ENCODE measurements at regions of chr12 and their contacts with region 1.

Region 1: GRCh38 chr12:6764011-6764828 is 1.9 kb upstream of the PTMS start:
- DNase-seq: peak; percentile 97
- H3K4me3 ChIP-seq: peak overlapping the region; percentile 16
- CTCF ChIP-seq: no peak

Region 2: GRCh38 chr12:6688999-6689882 is 75.0 kb before region 1 on chr12 and contains the start of gene ZNF384:
- CTCF ChIA-PET with region 1: interaction called, 3 read pairs
- POLR2A ChIA-PET with region 1: interaction called, 13 read pairs
- DNase-seq: peak; percentile 93
- H3K4me3 ChIP-seq: peak within 1 kb of the TSS; percentile 93
- CTCF ChIP-seq: no peak

Region 3: DNA sequence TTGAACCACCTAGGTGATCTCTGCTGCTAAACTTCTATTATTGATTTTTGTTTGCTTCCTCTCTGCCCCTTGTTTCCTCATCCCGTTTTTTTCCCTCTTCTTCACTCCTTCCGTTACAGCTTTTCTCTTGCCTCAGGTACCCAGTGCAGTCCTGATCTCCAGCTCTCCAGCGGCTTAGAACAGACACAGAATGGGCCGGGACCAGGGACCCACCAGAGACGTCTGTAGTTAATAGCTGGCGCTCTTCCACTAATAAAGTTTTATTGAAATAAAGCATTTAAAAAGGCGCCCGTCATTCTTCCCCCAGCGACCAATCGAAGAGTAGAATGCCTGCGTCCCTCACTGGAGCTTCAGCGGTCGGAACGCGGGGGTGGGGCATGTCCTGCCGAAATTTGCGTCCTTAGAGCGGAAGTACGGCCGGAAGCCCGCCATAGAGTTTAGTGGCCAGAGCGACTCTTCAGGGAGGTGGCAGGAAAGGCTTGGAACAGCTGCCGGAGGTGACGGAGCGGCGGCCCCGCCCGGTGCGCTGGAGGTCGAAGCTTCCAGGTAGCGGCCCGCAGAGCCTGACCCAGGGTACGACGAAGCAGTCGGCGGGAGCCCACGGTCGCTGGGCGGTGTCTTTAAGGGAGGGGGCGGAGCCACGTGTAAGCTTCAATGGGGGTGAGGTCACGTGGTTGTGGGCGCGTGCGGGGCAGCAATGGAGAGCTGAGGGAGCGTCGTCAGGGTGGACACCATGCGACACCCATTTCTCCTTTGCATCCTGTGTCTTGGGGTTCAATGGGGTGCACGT is 40.4 kb before region 1 on chr12 and contains the start of gene COPS7A:
- CTCF ChIA-PET with region 1: interaction called, 13 read pairs
- POLR2A ChIA-PET with region 1: interaction called, 11 read pairs
- DNase-seq: peak; percentile 84
- H3K4me3 ChIP-seq: peak within 1 kb of the TSS; percentile 56
- CTCF ChIP-seq: no peak

Region 4: GRCh38 chr12:6778574-6779550 is 14.6 kb after region 1 on chr12:
- CTCF ChIA-PET with region 1: interaction called, 136 read pairs
- POLR2A ChIA-PET with region 1: interaction called, 23 read pairs
- DNase-seq: peak; percentile 53
- H3K4me3 ChIP-seq: peak overlapping the region; percentile 54
- CTCF ChIP-seq: peak; percentile 98

Region 5: DNA sequence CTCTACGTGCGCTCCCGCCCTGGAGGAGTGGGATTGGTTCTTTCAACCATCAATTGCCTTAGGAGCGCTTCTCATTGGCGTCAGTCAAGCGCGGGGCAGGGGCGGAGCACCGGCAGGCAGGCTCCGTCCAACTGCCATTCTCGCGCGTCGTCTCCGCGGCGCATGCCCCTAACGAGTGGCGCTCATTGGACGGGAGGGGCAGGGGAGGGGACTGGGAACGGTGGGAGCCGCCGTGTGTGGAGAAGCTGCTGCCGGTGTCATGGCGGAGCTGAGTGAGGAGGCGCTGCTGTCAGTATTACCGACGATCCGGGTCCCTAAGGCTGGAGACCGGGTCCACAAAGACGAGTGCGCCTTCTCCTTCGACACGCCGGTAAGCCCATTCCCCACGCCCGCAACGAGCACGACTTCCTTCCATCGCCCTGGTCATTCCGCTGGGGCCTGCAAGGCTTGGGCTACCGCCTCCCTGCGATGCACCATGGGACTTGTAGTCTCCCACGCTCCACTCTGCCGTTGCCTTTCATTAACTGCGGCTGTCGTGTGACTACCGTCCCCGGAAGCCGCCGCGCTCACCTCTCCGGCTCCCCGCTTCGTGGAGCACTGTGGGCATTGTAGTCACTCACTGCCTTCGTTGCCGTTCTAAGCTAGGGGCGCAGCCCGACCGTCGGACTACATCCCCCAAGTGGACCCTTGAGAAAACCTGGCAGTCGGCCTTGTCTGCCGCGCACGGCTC is 87.9 kb after region 1 on chr12 and contains the start of gene USP5:
- CTCF ChIA-PET with region 1: interaction called, 5 read pairs
- POLR2A ChIA-PET with region 1: interaction called, 19 read pairs
- DNase-seq: peak; percentile 97
- H3K4me3 ChIP-seq: peak within 1 kb of the TSS; percentile 98
- CTCF ChIP-seq: no peak

Region 6: DNA sequence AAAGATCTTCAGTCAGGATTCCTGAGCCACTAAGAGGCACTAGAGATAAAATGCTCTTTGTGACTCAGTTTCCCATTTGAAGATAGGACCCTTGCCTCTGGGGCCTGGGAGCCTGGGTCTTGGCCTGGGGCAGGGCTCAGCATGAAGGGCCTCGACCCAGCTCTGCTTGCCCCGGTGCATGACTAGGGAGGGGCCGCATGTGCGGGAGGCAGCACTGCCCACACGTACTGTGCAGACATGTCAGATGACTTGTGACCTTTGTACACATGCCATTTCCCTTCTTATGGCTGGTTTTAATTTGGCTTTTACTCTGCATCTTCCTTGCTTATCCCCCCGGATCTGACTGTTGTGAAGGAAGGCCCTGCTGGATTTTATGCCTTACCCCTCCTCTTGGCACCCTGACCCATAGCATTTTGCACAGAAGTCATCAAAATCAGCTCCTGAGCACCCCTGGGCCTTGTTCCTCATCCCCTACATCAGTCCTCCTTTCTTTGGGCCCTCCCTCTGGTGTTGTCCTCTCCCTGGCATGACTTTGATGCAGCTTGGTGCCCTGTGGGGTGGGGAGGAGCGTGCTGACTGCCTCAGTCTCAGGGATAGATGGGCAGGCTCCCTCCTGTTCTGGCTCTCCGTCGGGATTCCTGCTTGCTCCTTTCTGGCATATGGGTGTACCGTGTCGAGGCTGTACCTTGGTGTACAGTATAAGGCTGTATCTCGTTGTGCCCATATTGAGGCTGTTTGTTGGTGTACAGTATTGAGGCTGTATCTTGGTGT is 370.4 kb after region 1 on chr12:
- CTCF ChIA-PET with region 1: no interaction called
- POLR2A ChIA-PET with region 1: no interaction called
- DNase-seq: no peak
- H3K4me3 ChIP-seq: no peak overlapping the region
- CTCF ChIP-seq: no peak